WTC11 (cell line): ENCODE measurements at regions of chr9 and their contacts with region 1.

Region 1: DNA sequence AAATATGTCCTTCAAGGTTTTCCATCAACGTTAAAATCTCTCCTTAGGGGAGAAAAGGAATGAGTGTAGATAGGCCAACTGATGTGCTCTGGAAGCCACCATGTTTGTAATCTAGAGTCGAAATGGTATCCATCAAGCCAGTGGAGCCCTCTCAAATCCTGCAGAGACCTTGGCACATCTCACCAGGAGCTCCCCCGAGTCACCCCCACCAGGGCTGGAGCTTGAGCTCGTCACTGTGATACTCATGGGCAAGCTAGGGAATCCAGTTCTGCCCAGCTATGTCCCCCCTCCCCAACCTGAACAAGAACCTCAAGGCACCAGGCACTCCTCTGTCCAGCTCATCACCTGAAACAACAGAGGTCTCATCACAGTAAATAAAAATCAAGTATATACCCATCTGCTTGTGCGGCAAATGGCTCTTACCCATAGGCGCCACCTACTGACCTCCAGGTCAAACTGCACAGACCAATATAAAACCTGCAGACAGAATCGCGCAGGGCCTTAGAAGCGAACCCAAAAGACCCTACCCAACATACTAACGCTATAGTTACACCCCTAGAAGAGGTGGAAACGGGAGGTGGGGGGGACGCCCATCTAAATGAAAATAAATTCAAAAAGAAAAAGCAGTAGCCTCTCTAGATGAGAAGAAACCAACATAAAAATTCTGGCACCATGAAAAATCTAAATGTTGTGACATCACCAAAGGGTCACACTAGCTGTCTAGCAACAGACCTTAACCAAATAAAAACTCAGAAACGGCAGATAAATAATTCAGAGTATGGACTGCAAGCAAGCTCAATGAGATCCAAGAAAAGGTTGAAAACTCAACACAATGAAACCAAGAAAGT is 75.0 kb downstream of the TTC39B start:
- DNase-seq: peak; percentile 41
- ATAC-seq: peak; percentile 98
- H3K4me3 Mint-ChIP-seq: no peak overlapping the region
- H3K27ac Mint-ChIP-seq: no peak overlapping the region
- H3K4me1 Mint-ChIP-seq: peaks cover 5% of the 10 kb centered on the region; the same call in 1 of the 2 replicates
- H3K27me3 Mint-ChIP-seq: no peaks in the 10 kb centered on the region
- CTCF ChIP-seq: peak; percentile 72

Region 2: DNA sequence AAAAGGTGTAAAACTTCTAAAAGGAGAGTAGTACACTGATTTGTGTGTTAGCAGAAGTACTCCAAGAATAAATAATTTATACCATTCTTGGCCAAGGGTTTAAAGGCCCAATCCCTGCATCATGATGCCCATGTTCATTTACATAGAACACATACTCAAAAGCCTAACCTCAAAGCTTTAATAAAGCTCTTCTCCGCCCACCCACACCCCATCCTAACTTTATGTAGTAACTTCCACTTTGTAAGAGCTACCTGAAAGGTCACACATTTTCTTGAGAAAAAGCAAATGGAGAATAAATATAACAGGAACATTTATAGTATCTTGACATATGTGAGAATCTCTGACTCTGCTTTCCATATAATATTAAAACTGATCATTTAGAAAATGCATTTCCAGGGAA is 173.0 kb before region 1 on chr9:
- CTCF ChIA-PET with region 1: no interaction called
- POLR2A ChIA-PET with region 1: no interaction called
- DNase-seq: no peak
- ATAC-seq: no peak
- H3K4me3 Mint-ChIP-seq: no peak overlapping the region
- H3K27ac Mint-ChIP-seq: no peak overlapping the region
- H3K4me1 Mint-ChIP-seq: peaks cover 7% of the 10 kb centered on the region
- H3K27me3 Mint-ChIP-seq: no peaks in the 10 kb centered on the region
- CTCF ChIP-seq: no peak

Region 3: GRCh38 chr9:15211160-15211814 is 20.7 kb before region 1 on chr9:
- CTCF ChIA-PET with region 1: interaction called, 20 read pairs
- POLR2A ChIA-PET with region 1: no interaction called
- DNase-seq: peak; percentile 57
- ATAC-seq: peak; percentile 80
- H3K4me3 Mint-ChIP-seq: no peak overlapping the region
- H3K27ac Mint-ChIP-seq: no peak overlapping the region
- H3K4me1 Mint-ChIP-seq: peaks cover 38% of the 10 kb centered on the region
- H3K27me3 Mint-ChIP-seq: no peaks in the 10 kb centered on the region
- CTCF ChIP-seq: peak; percentile 79

Region 4: GRCh38 chr9:15220658-15221318 is 11.2 kb before region 1 on chr9:
- CTCF ChIA-PET with region 1: interaction called, 19 read pairs
- POLR2A ChIA-PET with region 1: no interaction called
- DNase-seq: no peak
- ATAC-seq: no peak
- H3K4me3 Mint-ChIP-seq: no peak overlapping the region
- H3K27ac Mint-ChIP-seq: no peak overlapping the region
- H3K4me1 Mint-ChIP-seq: peaks cover 3% of the 10 kb centered on the region
- H3K27me3 Mint-ChIP-seq: no peaks in the 10 kb centered on the region
- CTCF ChIP-seq: no peak

Region 5: DNA sequence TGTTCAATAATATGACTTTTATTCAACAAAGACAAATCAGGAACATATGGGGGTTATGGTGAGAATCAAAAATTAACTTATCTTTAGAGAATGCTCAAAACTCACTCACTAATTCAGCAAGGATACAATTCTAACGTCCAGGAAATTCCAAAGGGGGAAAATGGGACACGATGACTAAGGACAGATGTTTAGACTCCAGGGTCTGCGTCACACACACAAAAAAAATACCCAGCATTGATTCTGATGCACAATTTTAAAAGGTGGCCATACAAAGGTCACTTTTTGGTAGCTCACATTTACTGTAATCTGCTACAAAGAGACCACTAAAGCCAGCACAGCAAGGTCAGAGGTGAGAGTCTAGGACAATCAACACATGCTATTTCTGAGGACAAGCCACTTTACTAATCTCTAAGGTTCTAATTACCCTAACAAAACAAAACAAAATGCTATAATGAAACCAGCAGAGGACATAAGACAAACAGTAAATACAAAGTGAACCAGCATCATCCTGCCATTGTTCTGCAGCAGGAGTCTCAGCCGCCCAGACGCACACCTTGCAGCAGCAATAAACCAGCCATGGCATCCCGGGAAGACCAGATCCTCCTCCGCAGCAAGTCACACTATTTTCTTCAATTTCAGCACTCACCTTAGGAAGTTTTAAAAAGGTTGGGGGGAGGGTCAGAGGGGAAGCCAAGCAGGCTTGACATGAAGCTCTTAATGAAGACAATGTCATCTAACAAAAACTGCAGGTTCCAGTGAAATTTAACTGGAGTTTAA is 17.2 kb after region 1 on chr9:
- CTCF ChIA-PET with region 1: interaction called, 10 read pairs
- POLR2A ChIA-PET with region 1: no interaction called
- DNase-seq: peak; percentile 15
- ATAC-seq: peak; percentile 80
- H3K4me3 Mint-ChIP-seq: no peak overlapping the region
- H3K27ac Mint-ChIP-seq: peak overlapping the region; percentile 54
- H3K4me1 Mint-ChIP-seq: peaks cover 52% of the 10 kb centered on the region
- H3K27me3 Mint-ChIP-seq: no peaks in the 10 kb centered on the region
- CTCF ChIP-seq: no peak

Region 6: DNA sequence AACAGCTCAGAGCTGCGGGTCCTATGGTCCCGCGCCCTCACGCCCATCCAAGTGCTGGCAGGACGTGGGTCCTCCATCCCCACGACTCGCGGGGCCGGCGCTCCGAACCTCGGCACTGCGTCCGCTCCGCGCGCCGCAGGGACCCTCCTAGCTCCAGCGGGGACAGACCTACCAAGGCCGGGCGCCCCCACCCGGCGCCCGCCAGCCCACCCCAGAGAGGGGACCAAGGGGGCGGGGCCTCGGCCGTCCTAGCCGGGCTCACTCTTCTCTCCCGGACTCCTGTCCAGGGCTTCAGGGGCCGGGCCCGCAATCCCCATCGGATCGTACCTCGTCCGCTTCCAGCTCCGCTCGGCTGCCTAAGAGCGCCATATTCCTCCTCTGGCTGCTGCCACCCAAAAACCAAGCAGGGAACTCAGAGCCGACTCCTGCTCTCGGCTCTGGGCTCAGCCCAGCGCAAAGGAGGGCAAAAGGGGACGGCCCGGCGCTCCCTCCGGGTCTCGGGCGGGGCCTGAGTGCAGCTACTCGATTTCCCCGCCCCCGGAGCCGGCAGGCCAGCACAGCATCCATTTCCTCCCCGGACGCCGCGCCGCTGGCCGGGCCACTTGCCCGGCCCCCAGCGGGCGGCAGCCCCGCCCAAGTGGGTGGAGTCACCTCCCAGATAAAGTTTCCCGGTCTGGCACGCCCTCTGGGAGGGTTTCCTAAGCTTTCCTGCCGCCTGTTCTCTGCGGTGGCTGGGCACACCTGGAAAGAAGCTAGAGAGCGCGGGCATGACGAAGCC is 74.9 kb after region 1 on chr9 and contains the start of gene TTC39B:
- CTCF ChIA-PET with region 1: interaction called, 13 read pairs
- POLR2A ChIA-PET with region 1: no interaction called
- DNase-seq: peak; percentile 98
- ATAC-seq: peak; percentile 91
- H3K4me3 Mint-ChIP-seq: peak within 1 kb of the TSS; percentile 94
- H3K27ac Mint-ChIP-seq: peak within 1 kb of the TSS; percentile 95
- H3K4me1 Mint-ChIP-seq: peaks cover 23% of the 10 kb centered on the region
- H3K27me3 Mint-ChIP-seq: peaks cover 16% of the 10 kb centered on the region
- CTCF ChIP-seq: no peak
- total RNA-seq, gene TTC39B: 12.3 to 13.9 TPM (median 12.5 TPM) in 3 replicates